Activated T-helper 1 cell treated with anti-CD3 and anti-CD28 coated beads, Interleukin-12 subunit alpha, Interleukin-12 subunit beta, Interleukin-2, Interleukin-4 antibody, amounts not matched to agents 30 ng/mL and 10 ng/mL and 1 ng/mL, durations not matched to agents 14 hours and 24 hours and 36 hours (primary cell): ENCODE measurements at regions of chr6 and their contacts with region 1.

Region 1: DNA sequence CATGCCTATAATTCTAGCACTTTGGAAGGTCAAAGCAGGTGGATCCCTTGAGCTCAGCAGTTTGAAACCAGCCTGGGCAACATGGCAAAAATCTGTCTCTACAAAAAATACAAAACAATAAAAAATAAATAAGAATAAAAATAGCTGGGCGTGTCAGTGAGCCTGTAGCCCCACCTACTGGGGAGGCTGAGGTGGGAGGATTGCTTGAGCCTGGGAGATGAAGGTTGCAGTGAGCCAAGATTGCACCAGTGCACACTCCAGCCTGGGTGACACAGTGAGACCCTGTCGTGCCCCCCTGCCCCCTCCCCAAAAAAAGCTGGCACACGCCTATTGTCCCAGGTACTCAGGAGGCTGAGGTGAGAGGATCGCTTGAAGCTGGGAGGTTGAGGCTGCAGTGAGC is 35.1 kb upstream of the SRPK1 start:
- DNase-seq: no peak
- H3K4me3 Mint-ChIP-seq: no peak overlapping the region
- H3K27ac Mint-ChIP-seq: no peak overlapping the region
- H3K4me1 Mint-ChIP-seq: peaks cover 13% of the 10 kb centered on the region
- H3K27me3 Mint-ChIP-seq: peaks cover 8% of the 10 kb centered on the region

Region 2: GRCh38 chr6:35719830-35720733 is 235.9 kb before region 1 on chr6:
- intact Hi-C with region 1: no loop called
- DNase-seq: no peak
- H3K4me3 Mint-ChIP-seq: peak overlapping the region; percentile 55
- H3K27ac Mint-ChIP-seq: peak overlapping the region; percentile 86
- H3K4me1 Mint-ChIP-seq: peaks cover 62% of the 10 kb centered on the region
- H3K27me3 Mint-ChIP-seq: peaks cover 3% of the 10 kb centered on the region

Region 3: DNA sequence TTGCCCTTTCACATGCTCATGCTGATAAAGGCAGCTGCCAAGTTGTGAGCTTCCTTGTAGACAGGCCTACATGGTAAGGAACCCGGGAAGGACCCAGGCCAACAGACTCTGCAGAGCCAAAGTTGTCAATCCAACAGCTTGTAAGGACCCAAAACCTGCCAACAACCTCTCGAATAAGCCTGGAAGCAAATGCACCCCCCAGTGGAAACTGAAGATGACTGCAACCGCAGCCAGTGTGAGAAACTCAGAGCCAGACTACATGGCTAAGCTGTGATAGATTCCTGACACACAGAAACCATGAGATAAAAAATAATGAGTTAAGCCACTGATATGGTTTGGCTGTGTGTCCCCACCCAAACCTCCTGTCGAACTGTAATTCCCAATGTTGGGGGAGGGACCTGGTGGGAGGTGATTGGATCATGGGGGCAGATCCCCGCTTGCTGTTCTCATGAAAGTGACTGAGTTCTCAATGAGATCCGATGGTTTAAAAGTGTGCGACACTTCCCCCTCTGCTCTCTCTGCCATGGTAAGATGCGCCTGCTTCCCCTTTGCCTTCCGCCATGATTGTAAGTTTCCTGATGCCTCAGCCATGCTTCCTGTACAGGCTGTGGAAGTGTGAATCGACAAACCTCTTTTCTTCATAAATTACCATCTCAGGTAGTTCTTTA is 198.4 kb before region 1 on chr6:
- intact Hi-C with region 1: loop called (anchors 10 kb)
- DNase-seq: no peak
- H3K4me3 Mint-ChIP-seq: no peak overlapping the region
- H3K27ac Mint-ChIP-seq: no peak overlapping the region
- H3K4me1 Mint-ChIP-seq: peaks cover 4% of the 10 kb centered on the region
- H3K27me3 Mint-ChIP-seq: peaks cover 18% of the 10 kb centered on the region

Region 4: DNA sequence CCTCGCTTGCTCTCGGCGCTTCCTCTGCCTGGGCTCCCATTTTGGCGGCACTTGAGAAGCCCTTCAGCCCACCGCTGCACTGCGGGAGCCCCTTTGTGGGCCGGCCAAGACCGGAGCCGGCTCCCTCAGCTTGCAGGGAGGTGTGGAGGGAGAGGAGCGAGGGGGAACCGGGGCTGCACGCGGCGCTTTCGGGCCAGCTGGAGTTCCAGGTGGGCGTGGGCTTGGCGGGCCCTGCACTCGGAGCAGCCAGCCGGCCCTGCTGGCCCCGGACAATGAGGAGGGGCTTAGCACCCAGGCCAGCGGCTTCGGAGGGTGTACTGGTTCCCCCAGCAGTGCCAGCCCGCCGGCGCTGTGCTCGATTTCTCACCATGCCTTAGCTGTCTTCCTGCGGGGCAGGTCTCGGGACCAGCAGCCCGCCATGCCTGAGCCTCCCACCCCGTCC is 24.8 kb before region 1 on chr6:
- intact Hi-C with region 1: no loop called
- DNase-seq: no peak
- H3K4me3 Mint-ChIP-seq: no peak overlapping the region
- H3K27ac Mint-ChIP-seq: no peak overlapping the region
- H3K4me1 Mint-ChIP-seq: no peaks in the 10 kb centered on the region
- H3K27me3 Mint-ChIP-seq: peaks cover 11% of the 10 kb centered on the region

Region 5: GRCh38 chr6:36067374-36068011 is 111.5 kb after region 1 on chr6:
- intact Hi-C with region 1: no loop called
- DNase-seq: no peak
- H3K4me3 Mint-ChIP-seq: no peak overlapping the region
- H3K27ac Mint-ChIP-seq: peak overlapping the region; percentile 41
- H3K4me1 Mint-ChIP-seq: peaks cover 33% of the 10 kb centered on the region
- H3K27me3 Mint-ChIP-seq: no peaks in the 10 kb centered on the region

Region 6: DNA sequence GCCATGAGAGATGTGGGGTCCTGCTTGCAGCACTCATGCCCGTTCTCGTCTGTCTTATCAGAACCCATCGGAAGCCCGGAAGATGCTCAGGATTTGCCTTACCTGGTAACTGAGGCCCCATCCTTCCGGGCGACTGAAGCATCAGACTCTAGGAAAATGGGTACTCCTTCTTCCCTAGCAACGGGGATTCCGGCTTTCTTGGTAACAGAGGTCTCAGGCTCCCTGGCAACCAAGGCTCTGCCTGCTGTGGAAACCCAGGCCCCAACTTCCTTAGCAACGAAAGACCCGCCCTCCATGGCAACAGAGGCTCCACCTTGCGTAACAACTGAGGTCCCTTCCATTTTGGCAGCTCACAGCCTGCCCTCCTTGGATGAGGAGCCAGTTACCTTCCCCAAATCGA is 1006.9 kb after region 1 on chr6:
- intact Hi-C with region 1: no loop called
- DNase-seq: peak; percentile 83
- H3K4me3 Mint-ChIP-seq: peak overlapping the region; percentile 38
- H3K27ac Mint-ChIP-seq: peak overlapping the region; percentile 86
- H3K4me1 Mint-ChIP-seq: peaks cover 38% of the 10 kb centered on the region
- H3K27me3 Mint-ChIP-seq: no peaks in the 10 kb centered on the region